BJ (cell line): ENCODE measurements at regions of chr1 and their contacts with region 1.

Region 1: DNA sequence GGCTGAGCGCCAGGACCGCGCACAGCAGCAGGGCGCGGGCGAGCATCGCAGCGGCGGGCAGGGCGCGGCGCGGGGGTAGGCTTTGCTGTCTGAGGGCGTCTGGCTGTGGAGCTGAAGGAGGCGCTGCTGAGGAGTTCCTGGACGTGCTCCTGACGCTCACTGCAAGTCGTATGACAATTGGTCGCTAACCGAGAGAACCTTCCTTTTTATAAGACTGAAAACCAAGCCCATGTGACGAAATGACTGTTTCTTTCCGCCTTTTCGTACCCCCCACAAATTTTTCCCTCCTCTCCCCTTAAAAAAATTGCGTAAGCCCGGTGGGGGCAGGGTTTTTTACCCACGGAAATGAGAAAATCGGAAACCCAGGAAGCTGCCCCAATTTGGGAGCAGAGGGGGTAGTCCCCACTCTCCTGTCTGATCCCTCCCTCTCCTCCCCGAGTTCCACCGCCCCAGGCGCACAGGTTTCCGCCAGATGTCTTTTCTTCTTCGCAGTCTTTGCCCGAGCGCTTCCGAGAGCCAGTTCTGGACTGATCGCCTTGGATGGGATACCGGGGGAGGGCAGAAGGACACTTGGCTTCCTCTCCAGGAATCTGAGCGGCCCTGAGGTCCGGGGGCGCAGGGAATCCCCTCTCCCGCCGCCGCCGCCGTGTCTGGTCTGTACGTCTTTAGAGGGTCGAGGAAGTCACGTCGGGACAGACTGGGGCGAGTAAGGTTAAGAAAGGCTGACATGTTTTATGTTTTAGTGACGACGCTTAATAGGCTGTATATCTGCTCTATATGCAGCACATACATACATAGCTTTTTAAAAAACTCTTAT is at the start of gene PTGS2:
- DNase-seq: peak; percentile 87
- H3K4me3 ChIP-seq: peak within 1 kb of the TSS; percentile 90
- H3K27me3 ChIP-seq: no peaks in the 10 kb centered on the region
- CTCF ChIP-seq: peak; percentile 71
- polyA plus RNA-seq, gene PTGS2: 100 and 116 TPM in 2 replicates

Region 2: GRCh38 chr1:186476264-186477040 is 204.0 kb before region 1 on chr1:
- CTCF ChIA-PET with region 1: interaction called, 10 read pairs
- POLR2A ChIA-PET with region 1: no interaction called
- DNase-seq: no peak
- H3K4me3 ChIP-seq: no peak overlapping the region
- H3K27me3 ChIP-seq: no peaks in the 10 kb centered on the region
- CTCF ChIP-seq: no peak

Region 3: GRCh38 chr1:186482661-186483255 is 197.7 kb before region 1 on chr1:
- CTCF ChIA-PET with region 1: interaction called, 15 read pairs
- POLR2A ChIA-PET with region 1: no interaction called
- DNase-seq: no peak
- H3K4me3 ChIP-seq: no peak overlapping the region
- H3K27me3 ChIP-seq: no peaks in the 10 kb centered on the region
- CTCF ChIP-seq: peak; percentile 95

Region 4: GRCh38 chr1:186559601-186560116 is 120.8 kb before region 1 on chr1:
- CTCF ChIA-PET with region 1: no interaction called
- POLR2A ChIA-PET with region 1: no interaction called
- DNase-seq: peak; percentile 27
- H3K4me3 ChIP-seq: no peak overlapping the region
- H3K27me3 ChIP-seq: no peaks in the 10 kb centered on the region
- CTCF ChIP-seq: no peak

Region 5: GRCh38 chr1:186595969-186596368 is 84.5 kb before region 1 on chr1:
- CTCF ChIA-PET with region 1: no interaction called
- POLR2A ChIA-PET with region 1: no interaction called
- DNase-seq: no peak
- H3K4me3 ChIP-seq: no peak overlapping the region
- H3K27me3 ChIP-seq: no peaks in the 10 kb centered on the region
- CTCF ChIP-seq: no peak

Region 6: DNA sequence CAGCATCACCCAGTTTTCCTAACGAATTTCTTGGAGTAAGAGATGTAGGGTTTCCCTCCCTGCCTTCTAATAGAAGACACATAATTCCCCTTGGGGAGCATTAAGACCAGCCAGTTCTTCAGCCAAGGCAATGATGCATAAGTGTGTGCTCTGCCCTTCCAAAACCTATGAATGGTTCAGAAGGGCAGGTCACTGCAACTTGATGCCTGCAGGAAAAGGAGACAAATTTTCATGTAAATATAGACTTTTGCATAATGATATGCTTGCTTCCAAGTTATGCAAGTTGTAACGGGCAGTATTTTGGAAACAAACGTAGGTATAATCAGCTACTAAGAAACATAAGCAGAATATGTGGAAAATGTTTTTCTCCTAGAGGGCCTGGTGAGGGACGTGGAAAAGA is 31.8 kb before region 1 on chr1:
- CTCF ChIA-PET with region 1: no interaction called
- POLR2A ChIA-PET with region 1: no interaction called
- DNase-seq: no peak
- H3K4me3 ChIP-seq: no peak overlapping the region
- H3K27me3 ChIP-seq: no peaks in the 10 kb centered on the region
- CTCF ChIP-seq: no peak

Region 7: DNA sequence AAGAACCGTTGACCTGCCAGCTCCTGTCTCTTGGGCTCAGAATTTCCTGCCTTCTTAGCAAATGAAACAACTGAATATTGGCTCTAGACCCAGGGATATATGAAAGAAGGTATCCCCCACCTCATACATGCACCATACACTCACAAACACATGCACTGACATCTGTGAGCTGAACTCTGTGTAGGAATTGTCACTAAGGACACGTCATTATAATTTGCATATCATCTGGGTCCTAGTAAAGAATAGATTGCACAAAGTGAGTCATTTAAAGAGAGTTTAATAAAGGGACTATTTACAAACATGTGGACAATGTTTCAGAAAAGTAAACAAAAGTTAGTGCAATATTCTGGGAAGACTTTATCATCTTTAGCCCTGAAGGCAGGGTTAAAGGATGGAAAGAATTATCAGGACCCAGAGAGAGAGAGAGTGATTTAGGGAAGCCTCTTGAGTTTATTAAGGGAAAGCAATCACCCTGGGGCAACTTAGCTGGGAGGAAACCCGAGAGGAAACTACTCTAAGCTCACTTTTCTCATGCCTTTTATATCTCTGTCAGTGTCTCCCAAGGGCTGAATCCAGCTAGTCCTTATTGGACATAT is 74.2 kb after region 1 on chr1:
- CTCF ChIA-PET with region 1: no interaction called
- POLR2A ChIA-PET with region 1: no interaction called
- DNase-seq: peak; percentile 11
- H3K4me3 ChIP-seq: no peak overlapping the region
- H3K27me3 ChIP-seq: no peaks in the 10 kb centered on the region
- CTCF ChIP-seq: no peak

Region 8: DNA sequence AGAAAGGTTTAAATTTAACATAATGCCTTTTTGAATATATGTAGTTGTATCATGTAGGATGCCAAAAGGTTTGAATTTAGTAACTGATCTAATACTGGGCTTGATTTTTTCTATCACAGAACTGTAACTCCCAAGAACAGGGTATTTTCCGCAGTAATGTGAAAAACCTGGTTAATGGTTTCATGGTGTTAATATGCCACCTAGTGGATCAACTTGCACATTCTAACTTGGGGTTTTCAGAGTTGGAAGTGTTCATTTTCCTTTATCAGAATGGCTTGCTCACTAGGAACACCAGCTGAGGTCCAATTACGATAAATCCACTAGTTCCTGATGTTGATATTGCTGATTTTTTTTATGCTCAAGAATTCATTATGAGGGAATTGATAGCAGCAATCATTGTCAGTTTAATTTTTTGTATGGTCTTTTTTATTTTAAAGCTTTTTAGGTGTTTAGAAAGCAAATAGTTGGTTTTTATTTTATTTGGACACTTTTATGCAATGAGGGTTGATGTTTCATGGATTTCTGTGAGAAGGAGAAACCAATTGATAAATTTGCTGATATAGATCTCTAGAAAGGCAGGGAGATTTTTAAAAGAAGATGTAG is 305.5 kb after region 1 on chr1:
- CTCF ChIA-PET with region 1: interaction called, 10 read pairs
- POLR2A ChIA-PET with region 1: no interaction called
- DNase-seq: no peak
- H3K4me3 ChIP-seq: no peak overlapping the region
- H3K27me3 ChIP-seq: no peaks in the 10 kb centered on the region
- CTCF ChIP-seq: peak; percentile 60